RWPE1 (cell line): ENCODE measurements at regions of chr20 and their contacts with region 1.

Region 1: DNA sequence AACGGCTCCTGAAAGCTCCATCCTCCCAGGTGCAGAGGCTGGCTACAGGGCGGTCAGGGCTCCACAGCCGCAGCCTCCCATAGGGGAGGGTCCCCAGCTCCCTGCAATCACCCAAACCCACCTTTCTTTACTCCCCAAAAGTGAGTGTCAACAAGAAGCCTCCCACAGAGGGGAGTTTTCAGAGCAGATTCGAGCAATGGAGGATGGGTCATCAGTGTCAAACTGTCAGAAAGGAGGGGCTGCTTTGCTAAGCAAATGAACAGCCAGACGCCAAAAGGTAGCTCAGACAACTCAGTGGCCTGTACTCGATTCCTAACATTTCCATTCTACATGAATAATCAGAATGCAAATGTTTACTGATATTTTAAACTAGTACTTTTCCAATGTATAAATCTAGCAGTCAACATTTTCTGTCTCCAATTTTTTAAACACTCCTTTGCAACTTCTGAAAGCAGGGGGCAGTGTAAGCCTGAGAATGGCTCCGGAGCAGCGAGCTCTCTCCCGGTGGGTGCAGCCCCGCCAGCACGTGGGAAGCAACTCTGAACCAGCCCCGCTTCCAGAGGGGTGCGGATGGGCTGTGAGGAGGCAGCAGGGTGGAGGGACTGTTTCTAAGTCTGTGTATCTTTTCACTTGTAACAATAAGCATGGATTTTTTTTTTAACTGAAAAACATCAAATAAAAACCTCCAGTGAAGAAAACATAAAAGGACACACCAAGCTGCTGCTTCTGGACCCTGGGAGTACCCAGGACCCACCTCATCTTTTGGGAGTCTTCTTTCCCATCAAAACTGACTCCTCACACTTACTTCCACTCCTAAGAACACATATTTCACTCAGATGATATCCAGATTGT is 54.9 kb downstream of the TAF4 start:
- DNase-seq: peak; percentile 80
- H3K27ac ChIP-seq: no peak overlapping the region; the same call in 1 of the 2 replicates
- CTCF ChIP-seq: peak; percentile 73

Region 2: GRCh38 chr20:62121776-62122631 is 111.2 kb after region 1 on chr20 and contains the start of gene LSM14B:
- CTCF ChIA-PET with region 1: interaction called, 31 read pairs
- POLR2A ChIA-PET with region 1: no interaction called
- DNase-seq: peak; percentile 100
- H3K27ac ChIP-seq: peak within 1 kb of the TSS; percentile 98
- CTCF ChIP-seq: no peak

Region 3: DNA sequence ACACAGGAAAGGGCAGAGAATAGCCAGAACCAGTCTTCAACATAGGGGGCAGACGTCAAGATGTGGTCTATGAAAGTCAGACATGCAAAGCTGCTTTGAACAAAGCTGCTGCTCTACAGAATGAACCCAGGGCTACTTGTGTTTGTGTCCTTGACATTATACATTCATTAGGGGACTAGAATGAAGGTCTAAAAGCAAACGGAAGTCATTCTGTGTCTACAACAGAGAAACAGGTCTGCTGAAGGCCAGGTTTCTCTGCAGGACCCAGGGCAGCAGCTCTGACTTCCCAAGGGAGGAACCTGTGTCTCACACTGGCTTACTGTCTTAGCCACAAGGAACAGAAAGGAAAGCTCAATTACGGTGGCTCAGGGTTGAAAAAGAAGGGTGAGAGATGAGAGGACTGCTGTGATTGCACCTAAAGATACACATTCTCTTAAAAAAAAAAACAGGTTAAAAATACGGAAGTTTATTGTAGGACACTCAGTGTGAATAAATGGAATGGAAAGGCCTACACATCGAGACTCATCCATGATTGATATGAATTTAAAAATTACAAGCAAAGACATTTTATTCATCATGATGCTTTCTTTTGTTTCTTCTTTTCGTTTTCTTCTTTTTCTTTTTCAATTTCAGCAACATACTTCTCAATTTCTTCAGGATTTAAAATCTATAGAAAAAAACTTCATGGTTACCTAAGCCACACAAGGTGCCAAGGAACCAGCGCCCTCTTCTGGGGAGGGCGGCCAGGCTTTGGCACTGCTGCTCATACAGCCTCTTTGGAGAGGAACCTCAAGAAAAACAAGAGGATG is 125.7 kb after region 1 on chr20:
- CTCF ChIA-PET with region 1: interaction called, 20 read pairs
- POLR2A ChIA-PET with region 1: interaction called, 3 read pairs
- DNase-seq: peak; percentile 64
- H3K27ac ChIP-seq: peak overlapping the region; percentile 56
- CTCF ChIP-seq: peak; percentile 98